Uterus (tissue), 4 donors: ENCODE measurements at regions of chr17 and their contacts with region 1.

Region 1: DNA sequence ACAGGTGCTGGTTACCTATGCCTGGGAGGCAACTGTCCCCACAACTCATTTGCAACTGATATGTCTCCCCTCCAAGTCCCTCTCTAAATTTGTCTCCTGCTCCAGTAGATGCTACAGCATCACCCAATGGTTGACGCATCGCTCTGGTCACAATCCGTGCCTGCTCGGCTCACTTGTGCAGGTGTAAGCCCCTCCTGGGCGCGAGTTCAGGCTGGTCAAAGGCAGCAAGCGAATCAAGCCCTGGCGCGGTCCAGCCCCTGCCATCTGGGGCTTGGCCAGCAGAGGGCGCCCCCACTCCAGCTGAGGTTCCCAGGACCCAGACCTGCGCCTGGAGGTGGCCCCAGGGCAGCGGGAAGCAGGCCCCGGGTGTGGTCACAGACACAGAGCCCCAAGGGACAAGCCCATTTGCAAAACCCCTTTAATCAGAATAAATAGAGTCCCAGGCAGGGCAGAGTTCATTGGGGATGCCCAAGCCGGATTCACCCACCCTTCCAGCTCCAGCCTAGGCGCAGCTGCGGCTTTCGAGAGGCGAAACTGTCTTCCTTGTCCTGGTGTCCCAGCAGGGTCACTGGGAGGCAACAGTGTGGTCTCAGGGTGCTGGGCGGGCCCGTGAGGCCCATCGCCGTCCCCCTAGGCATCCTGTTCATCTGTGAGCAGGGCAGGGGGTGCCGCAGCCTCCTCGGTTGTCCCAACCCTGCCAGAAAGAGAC is 15.9 kb downstream of the TMC6 start:
- DNase-seq: peak; percentile 58 to 76
- H3K4me3 ChIP-seq: no peak overlapping the region
- H3K27ac ChIP-seq: no peak overlapping the region
- H3K4me1 ChIP-seq: no peaks in the 10 kb centered on the region
- H3K27me3 ChIP-seq: no peaks in the 10 kb centered on the region
- CTCF ChIP-seq: peak; percentile 97 to 99 (median 98)
- POLR2A ChIP-seq: peak in 1 of 2 donors; percentile 18

Region 2: GRCh38 chr17:78176548-78177025 is 63.9 kb after region 1 on chr17:
- intact Hi-C with region 1: loop called (anchors 5 kb)
- DNase-seq: peak; percentile 66 to 68
- H3K4me3 ChIP-seq: no peak overlapping the region
- H3K27ac ChIP-seq: no peak overlapping the region
- H3K4me1 ChIP-seq: peaks cover 0 to 12% of the 10 kb centered on the region in 2 donors
- H3K27me3 ChIP-seq: no peaks in the 10 kb centered on the region
- CTCF ChIP-seq: peak; percentile 80 to 90 (median 84)
- POLR2A ChIP-seq: no peak